ENCODE measurements at regions of chr6 and their contacts with region 1.

Region 1: DNA sequence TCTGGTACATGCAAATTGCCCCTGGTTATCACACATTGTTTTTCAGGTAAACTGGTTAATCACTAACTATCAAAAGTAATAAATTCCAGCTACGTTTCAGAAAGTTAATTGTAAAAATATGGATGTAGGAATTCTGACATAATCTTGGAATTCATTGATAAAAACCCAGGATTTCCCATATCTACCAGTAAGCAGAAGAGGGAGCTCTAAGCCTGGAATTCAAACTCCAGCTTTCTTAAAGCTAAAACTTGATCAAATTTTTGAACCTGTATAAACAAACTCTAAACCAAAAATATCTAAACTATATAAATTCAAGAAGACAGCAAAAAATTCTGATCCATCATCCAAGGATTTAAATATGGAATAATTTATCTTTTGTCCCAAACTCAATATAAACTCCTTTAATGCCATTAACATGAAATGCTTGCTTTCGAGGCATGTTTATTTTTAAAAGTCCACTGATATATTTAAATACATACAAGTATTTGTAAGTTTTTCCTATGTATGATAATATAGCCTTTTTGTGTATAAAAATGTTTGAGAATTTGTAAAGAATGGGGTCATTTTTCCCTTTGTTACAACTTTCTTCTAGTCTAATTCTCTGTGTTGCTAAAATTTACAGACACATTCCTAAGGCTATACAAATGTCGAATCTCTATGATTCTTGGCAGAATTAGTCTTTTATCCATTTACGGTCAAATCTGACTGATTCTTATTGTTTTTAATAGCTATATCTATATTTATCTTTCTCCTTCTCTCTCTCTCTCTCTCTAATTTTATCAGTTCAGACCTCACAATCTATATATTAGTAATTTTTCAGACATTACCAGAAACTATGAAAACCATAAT is 91.4 kb upstream of the RNF217 start:
- DNase-seq: no peak
- H3K4me3 ChIP-seq: no peak overlapping the region
- H3K27ac ChIP-seq: no peak overlapping the region
- H3K4me1 ChIP-seq: no peaks in the 10 kb centered on the region
- H3K27me3 ChIP-seq: no peaks in the 10 kb centered on the region
- CTCF ChIP-seq: peak in 2 of 3 experiments; percentile 41 to 49; a peak in 2 of 4 replicates
- EP300 ChIP-seq: no peak
- POLR2A ChIP-seq: no peak
- RAD21 ChIP-seq: peak; percentile 79 to 86

Region 2: DNA sequence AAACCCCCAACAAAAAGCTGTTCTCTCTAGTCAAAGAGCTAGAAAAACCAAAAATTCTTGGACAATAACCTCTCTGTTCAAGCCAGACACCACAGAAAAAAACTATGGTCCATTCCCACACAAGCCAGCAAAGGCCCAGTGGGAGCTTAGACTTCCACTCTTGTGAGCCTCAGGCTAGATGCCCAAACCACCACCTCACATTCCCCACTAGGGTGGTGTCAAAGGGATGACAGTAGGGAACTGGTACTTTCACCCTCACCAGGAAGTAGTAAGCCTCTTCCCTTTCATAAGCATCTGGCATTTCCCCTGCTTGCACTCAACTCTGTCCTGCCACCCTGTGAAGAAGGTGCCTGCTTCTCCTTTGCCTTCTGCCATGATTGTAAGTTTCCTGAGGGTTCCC is 33.0 kb after region 1 on chr6:
- CTCF ChIA-PET with region 1: no interaction called
- POLR2A ChIA-PET with region 1: no interaction called
- DNase-seq: no peak
- H3K4me3 ChIP-seq: no peak overlapping the region
- H3K27ac ChIP-seq: no peak overlapping the region
- H3K4me1 ChIP-seq: no peaks in the 10 kb centered on the region
- H3K27me3 ChIP-seq: no peaks in the 10 kb centered on the region
- CTCF ChIP-seq: peak in 1 of 3 experiments; percentile 6; a peak in 1 of 4 replicates
- EP300 ChIP-seq: no peak
- POLR2A ChIP-seq: no peak
- RAD21 ChIP-seq: no peak

Region 3: DNA sequence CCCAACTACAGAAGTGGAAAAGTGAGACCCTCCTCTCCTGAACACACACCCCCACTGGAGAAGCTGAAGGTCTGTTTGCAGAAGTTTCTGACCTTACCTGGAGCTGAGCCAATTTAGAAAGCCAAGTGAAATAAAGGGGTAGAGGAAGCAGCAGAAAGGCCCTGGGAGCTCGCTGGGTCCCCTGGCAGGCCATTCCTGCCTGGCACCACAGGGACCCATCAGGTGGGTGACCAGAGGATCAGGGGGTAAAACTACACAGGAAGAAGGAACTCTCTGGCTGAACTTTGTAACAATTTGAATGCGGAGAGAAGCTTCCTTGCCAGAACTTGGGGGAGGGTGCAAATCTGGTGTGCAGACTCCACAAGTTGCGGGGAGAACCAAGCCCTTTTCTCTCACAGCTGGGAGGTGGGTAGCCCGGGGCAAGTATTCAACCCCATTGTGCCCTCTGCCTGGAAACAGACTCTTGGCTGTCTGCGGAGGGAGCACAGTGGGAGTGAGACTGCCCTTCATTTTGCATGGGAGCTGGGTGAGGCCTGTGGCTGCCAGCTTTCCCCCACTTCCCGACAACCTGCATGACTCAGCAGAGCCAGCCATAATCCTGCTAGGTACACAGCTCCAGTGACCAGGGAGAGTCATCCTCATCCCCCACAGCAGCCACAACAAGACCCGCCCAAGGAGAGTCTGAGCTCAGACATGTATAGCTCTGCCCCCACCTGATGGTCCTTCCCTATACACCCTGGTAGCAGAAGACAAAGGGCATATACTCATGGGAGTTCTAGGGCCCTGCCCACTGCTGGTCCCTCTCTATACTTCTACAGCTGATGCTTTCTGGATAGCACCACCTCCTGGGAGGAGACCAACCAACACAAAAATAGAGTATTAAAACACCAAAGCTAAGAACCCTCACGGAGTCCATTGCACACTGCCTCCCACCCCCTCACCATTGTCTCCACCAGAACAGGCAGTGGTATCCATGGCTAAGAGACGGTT is 253.2 kb after region 1 on chr6:
- CTCF ChIA-PET with region 1: interaction called, 18 read pairs
- POLR2A ChIA-PET with region 1: no interaction called
- DNase-seq: no peak
- H3K4me3 ChIP-seq: no peak overlapping the region
- H3K27ac ChIP-seq: no peak overlapping the region
- H3K4me1 ChIP-seq: peaks cover 0 to 9% (median 0%) of the 10 kb centered on the region in 4 experiments; a peak in 1 of 7 replicates
- H3K27me3 ChIP-seq: no peaks in the 10 kb centered on the region
- CTCF ChIP-seq: no peak
- EP300 ChIP-seq: no peak
- POLR2A ChIP-seq: no peak
- RAD21 ChIP-seq: no peak